HEK293T (cell line): ENCODE measurements at regions of chr22 and their contacts with region 1.

Region 1: GRCh38 chr22:36065775-36066559 is 37.3 kb upstream of the RBFOX2 start:
- DNase-seq: peak; percentile 97

Region 2: GRCh38 chr22:35921777-35922176 is 144.2 kb before region 1 on chr22:
- CTCF ChIA-PET with region 1: interaction called, 20 read pairs
- POLR2A ChIA-PET with region 1: interaction called, 4 read pairs
- DNase-seq: peak; percentile 71

Region 3: GRCh38 chr22:35995772-35996171 is 70.2 kb before region 1 on chr22:
- CTCF ChIA-PET with region 1: interaction called, 11 read pairs
- POLR2A ChIA-PET with region 1: no interaction called
- DNase-seq: no peak

Region 4: DNA sequence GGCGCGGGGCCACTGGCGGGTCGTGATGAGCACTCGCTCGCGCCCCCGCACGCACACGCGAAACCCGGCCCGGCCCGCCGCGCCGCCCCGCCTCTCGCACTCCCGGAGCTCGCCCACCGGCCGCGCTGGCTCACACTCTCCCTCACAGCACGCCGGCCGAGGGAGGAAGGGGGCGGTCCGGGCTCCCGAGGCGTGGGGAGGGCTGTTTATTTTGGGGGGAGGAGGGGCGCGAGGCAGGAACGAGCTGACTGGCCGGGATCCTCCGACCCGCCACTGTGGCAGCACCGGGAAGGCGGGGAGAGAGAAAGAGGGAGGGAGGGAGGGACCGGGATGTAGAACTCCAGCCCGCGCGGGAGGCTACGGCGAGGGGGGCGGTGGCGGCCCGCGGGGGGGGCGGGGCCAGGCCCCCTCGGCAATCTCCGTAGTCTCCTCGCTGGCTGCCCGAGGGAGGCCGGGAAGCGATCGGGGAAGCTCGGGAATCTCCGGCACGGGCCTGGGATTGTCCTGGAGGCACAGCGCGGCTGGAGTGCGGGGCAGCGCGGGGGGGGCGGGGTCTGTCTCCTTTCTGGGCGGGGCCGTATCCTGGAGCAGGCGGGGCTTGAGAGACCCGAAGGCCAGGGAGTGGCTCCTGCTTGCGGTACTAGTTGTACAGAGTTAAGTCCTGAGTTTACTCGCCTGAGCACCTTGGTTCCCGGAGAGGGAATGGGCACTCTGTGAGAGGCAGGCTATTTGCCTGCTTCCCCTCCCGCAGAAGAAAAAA is 37.1 kb before region 1 on chr22 and contains the start of gene RBFOX2:
- CTCF ChIA-PET with region 1: interaction called, 21 read pairs
- POLR2A ChIA-PET with region 1: interaction called, 54 read pairs
- DNase-seq: peak; percentile 100

Region 5: GRCh38 chr22:36052505-36053270 is 13.3 kb before region 1 on chr22:
- CTCF ChIA-PET with region 1: interaction called, 59 read pairs
- POLR2A ChIA-PET with region 1: interaction called, 30 read pairs
- DNase-seq: no peak

Region 6: GRCh38 chr22:36084717-36085116 is 18.8 kb after region 1 on chr22:
- CTCF ChIA-PET with region 1: interaction called, 10 read pairs
- POLR2A ChIA-PET with region 1: interaction called, 3 read pairs
- DNase-seq: no peak

Region 7: DNA sequence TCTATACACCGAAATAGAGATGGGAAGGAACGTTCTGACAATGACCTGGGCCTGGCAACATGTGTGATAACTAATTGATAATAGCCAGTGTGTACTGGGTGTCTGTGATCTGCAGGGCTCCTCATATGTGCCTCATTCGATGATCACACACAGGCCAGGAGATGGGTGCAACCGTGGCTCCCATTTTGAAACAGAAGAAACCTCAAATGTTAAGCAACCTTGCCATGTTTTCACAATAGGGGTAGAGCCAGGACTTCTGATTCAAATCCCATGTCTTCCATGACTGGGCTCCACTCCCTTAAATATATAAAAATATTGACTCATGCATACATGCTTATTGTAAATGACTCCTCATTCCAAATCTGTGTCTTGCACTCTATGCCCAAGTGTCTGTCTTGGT is 83.5 kb after region 1 on chr22:
- CTCF ChIA-PET with region 1: no interaction called
- POLR2A ChIA-PET with region 1: no interaction called
- DNase-seq: no peak

Region 8: GRCh38 chr22:36180038-36180880 is 114.3 kb after region 1 on chr22:
- CTCF ChIA-PET with region 1: no interaction called
- POLR2A ChIA-PET with region 1: no interaction called
- DNase-seq: peak; percentile 91